ENCODE measurements at regions of chr11 and their contacts with region 1.

Region 1: DNA sequence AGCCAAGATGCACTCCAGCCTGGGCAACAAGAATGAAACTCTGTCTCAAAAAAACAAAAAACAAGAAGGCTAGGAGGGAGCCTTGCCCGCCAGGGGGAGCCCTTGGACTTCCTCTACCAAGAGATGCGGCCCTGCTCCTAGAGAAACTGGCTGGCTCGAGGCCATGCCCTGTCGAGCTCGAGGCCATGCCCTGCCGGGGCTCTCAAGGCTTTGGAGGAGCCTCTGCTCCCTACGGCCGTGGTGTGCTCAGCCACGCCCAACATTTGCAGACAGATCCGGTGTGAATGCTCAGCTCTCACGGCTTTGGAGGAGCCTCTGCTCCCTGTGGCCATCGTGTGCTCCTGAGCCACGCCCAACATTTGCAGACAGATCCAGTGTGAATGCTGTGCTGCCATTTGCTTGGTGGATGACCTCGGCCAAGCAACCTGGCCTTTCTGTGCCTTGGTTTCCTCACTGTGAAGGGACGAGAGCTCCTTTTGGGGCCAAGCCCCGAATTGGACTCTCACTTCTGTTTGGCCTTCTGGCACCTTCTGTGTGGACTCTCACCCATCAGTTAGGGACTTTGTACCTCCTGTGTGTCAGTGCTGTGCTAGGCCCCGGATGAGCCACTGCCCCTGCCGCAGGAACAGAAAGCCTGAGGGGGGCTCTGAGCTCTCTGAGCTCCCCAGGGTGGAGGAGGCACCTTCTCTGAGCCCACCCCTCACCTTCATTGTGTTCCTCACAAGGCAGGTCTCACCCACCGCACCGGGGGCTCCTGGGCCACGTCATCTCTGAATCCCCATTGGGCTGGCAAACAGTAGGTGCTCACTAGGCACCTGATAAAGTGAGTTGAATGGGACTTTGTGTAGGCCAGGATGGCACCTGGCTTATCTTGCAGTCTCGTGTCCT is 14.1 kb downstream of the C11orf24 start:
- DNase-seq: peak; percentile 95
- ATAC-seq: peak; percentile 97
- H3K4me3 Mint-ChIP-seq: no peak overlapping the region
- H3K27ac Mint-ChIP-seq: peak overlapping the region; percentile 16
- H3K4me1 Mint-ChIP-seq: peaks cover 5% of the 10 kb centered on the region
- H3K27me3 Mint-ChIP-seq: no peaks in the 10 kb centered on the region

Region 2: GRCh38 chr11:68271781-68272608 is 14.3 kb after region 1 on chr11 and contains the start of gene C11orf24:
- CTCF ChIA-PET with region 1: interaction called, 26 read pairs
- DNase-seq: peak; percentile 94
- ATAC-seq: peak; percentile 92
- H3K4me3 Mint-ChIP-seq: peak within 1 kb of the TSS; percentile 81
- H3K27ac Mint-ChIP-seq: peak within 1 kb of the TSS; percentile 96
- H3K4me1 Mint-ChIP-seq: peaks cover 42% of the 10 kb centered on the region
- H3K27me3 Mint-ChIP-seq: no peaks in the 10 kb centered on the region
- total RNA-seq, gene C11orf24: 26.4 to 27.0 TPM

Region 3: DNA sequence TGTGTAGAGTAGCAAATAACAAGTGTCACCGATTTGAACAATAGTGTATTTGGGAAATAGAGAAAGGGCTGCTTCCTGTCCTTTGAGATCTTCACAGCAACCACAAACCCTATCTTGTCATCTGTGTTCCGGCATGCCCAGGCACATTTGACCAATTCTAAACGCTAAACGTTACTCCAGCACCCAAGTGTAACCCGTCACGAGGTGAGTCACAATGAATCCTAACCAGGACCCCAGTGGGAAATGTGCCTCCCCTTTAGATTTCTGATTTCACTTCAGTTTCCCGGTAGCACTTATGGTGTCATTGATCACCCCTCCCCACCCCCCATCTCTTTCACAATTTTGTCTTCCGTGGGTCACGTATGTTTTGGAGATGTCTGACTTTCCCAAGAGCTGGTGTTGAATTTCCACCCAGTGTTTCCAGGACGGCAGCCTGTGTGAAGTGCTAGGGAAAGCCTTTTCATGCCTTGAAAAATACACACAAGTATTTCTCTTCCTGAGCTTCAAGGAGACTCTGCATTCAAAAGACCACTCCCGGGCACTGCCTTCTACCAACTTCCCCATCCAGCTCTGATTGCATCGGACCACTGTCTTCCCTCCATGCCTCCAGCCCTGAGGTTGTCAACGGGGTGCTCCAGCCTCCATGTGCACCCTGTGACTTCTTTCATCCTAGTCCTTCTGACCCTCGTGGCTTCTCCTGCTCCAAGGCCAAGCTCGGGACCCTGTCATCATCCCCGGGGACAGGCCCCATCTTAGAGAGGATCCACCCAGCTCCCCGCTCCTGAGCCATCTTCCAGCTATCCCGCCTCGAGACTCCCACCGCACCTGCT is 24.6 kb after region 1 on chr11:
- CTCF ChIA-PET with region 1: interaction called, 12 read pairs
- DNase-seq: peak; percentile 81
- ATAC-seq: peak; percentile 91
- H3K4me3 Mint-ChIP-seq: peak overlapping the region; percentile 55
- H3K27ac Mint-ChIP-seq: peak overlapping the region; percentile 86
- H3K4me1 Mint-ChIP-seq: peaks cover 26% of the 10 kb centered on the region
- H3K27me3 Mint-ChIP-seq: no peaks in the 10 kb centered on the region

Region 4: GRCh38 chr11:68383976-68384501 is 126.3 kb after region 1 on chr11:
- CTCF ChIA-PET with region 1: interaction called, 19 read pairs
- DNase-seq: peak; percentile 77
- ATAC-seq: peak; percentile 39
- H3K4me3 Mint-ChIP-seq: no peak overlapping the region
- H3K27ac Mint-ChIP-seq: no peak overlapping the region
- H3K4me1 Mint-ChIP-seq: peaks cover 26% of the 10 kb centered on the region
- H3K27me3 Mint-ChIP-seq: peaks cover 9% of the 10 kb centered on the region